GM12878 (cell line): ENCODE measurements at regions of chr11 and their contacts with region 1.

Region 1: DNA sequence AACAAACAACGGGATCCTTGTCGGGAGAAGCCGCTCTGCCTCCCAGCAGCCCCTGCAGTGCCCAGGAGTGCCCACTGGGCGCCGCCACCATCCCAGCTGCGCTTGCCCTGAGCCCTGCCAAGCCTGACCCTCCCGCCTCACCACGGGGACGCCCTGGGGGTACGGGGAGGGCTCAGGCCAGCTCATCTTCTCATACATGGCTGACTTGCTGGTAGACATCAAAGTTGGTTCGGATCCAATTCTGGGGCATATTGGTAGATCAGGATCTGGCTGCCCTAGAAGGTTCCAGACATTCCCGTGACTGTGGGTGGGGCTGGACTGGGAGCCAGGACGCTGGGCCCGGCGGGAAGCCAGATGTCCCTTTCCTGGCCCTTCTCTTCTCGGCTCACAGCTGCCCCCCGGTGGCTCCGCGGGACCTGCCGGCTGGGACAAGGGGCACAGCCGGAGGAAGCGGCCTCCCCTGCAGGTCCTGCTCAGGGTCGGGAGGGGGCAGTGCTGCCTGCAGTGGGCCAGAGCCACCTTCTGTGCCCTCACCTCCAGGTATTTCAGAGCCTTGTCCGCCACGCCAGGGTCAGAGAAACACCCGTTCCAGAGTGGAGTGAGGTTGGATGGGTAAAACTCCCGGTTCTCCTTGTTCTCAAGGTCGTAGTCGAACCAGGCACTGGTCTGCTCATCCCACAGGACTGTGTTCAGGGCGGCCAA is 10.6 kb upstream of the TREH start:
- DNase-seq: no peak
- ATAC-seq: peak; percentile 97
- H3K4me3 ChIP-seq: peak overlapping the region; percentile 56; the same call in 1 of the 2 replicates
- H3K27ac ChIP-seq: no peak overlapping the region
- H3K4me1 ChIP-seq: peaks cover 35% of the 10 kb centered on the region
- H3K27me3 ChIP-seq: no peaks in the 10 kb centered on the region; a peak in 1 of 4 replicates
- CTCF ChIP-seq: peak; percentile 93 to 98 (median 95)
- EP300 ChIP-seq: no peak
- POLR2A ChIP-seq: no peak
- RAD21 ChIP-seq: peak; percentile 88

Region 2: DNA sequence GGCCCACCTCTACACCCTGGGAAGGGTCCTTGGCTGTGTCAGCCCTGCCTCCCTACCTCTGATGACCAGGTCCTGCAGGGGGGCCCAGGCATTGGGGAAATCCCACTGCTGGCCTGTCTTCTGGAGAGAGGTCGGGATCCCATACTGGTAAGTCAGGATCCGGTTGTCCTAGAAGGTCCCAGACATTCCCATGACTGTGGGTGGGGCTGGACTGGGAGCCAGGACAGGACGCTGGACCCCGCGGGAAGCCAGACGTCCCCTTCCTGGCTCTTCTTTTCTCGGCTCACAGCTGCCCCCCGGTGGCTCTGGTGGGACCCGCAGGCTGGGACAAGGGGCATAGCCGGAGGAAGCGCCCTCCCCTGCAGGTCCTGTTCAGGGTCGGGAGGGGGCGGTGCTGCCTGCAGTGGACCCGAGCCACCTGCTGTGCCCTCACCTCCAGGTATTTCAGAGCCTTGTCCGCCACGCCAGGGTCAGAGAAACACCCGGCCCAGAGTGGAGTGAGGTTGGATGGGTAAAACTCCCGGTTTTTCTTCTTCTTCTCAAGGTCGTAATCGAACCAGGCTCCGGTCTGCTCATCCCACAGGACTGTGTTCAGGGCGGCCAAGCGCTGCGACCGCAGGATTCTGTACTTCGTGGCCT is 30.6 kb before region 1 on chr11:
- CTCF ChIA-PET with region 1: interaction called, 11 read pairs
- POLR2A ChIA-PET with region 1: no interaction called
- RAD21 ChIA-PET with region 1: no interaction called
- SMC1A ChIA-PET with region 1: no interaction called
- in situ Hi-C with region 1: no loop called
- intact Hi-C with region 1: no loop called
- DNase-seq: peak; percentile 2
- ATAC-seq: peak; percentile 98
- H3K4me3 ChIP-seq: no peak overlapping the region
- H3K27ac ChIP-seq: no peak overlapping the region
- H3K4me1 ChIP-seq: no peaks in the 10 kb centered on the region
- H3K27me3 ChIP-seq: peaks cover 0 to 4% of the 10 kb centered on the region in 2 experiments; a peak in 3 of 4 replicates
- CTCF ChIP-seq: peak; percentile 86 to 96 (median 94); a peak in 5 of 6 replicates
- EP300 ChIP-seq: no peak
- POLR2A ChIP-seq: no peak
- RAD21 ChIP-seq: peak; percentile 57

Region 3: GRCh38 chr11:118766035-118766434 is 76.0 kb after region 1 on chr11:
- CTCF ChIA-PET with region 1: interaction called, 10 read pairs
- POLR2A ChIA-PET with region 1: no interaction called
- RAD21 ChIA-PET with region 1: no interaction called
- SMC1A ChIA-PET with region 1: interaction called, 3 read pairs
- in situ Hi-C with region 1: no loop called
- intact Hi-C with region 1: no loop called
- DNase-seq: no peak
- ATAC-seq: no peak
- H3K4me3 ChIP-seq: no peak overlapping the region
- H3K27ac ChIP-seq: no peak overlapping the region
- H3K4me1 ChIP-seq: no peaks in the 10 kb centered on the region
- H3K27me3 ChIP-seq: no peaks in the 10 kb centered on the region
- CTCF ChIP-seq: no peak
- EP300 ChIP-seq: no peak
- POLR2A ChIP-seq: no peak
- RAD21 ChIP-seq: no peak

Region 4: DNA sequence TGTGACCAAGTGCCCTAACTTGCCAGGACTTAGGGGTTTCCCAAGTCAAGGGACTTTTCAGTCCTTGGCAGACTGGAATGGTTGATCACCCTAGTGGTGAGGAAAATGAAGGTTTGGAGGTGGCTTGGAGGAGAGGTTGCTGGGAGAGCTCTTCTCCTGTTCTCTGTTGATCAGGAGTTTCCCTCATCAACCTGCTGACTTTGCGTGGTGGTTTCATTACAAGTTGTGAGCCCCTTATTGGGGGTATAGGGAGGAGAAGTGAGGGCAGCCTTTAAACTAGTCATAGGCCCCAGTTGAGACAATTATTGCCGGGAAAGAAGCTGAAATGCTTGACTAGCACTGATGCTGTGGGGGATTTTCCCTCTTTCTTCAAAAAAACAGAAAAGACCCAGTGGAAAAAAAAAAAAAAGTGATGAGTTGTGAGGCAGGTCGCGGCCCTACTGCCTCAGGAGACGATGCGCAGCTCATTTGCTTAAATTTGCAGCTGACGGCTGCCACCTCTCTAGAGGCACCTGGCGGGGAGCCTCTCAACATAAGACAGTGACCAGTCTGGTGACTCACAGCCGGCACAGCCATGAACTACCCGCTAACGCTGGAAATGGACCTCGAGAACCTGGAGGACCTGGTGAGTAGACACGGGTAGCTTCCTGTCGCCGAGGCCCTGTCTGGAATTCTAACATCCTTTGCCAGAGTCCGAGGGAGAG is 193.5 kb after region 1 on chr11 and contains the start of gene CXCR5:
- CTCF ChIA-PET with region 1: interaction called, 11 read pairs
- POLR2A ChIA-PET with region 1: interaction called, 3 read pairs
- RAD21 ChIA-PET with region 1: interaction called, 5 read pairs
- SMC1A ChIA-PET with region 1: interaction called, 11 read pairs
- in situ Hi-C with region 1: no loop called
- intact Hi-C with region 1: no loop called
- DNase-seq: no peak
- ATAC-seq: peak; percentile 81
- H3K4me3 ChIP-seq: peak within 1 kb of the TSS; percentile 13; the same call in 1 of the 2 replicates
- H3K27ac ChIP-seq: no peak within 1 kb of the TSS
- H3K4me1 ChIP-seq: peaks cover 43% of the 10 kb centered on the region
- H3K27me3 ChIP-seq: peaks cover 3 to 9% of the 10 kb centered on the region in 2 experiments; a peak in 2 of 4 replicates
- CTCF ChIP-seq: peak in 2 of 3 experiments; percentile 8 to 27; a peak in 2 of 6 replicates
- EP300 ChIP-seq: no peak
- POLR2A ChIP-seq: peak; percentile 58
- RAD21 ChIP-seq: peak; percentile 30; the same call in 1 of the 2 replicates
- polyA plus RNA-seq, gene CXCR5: 0.03 to 0.11 TPM

Region 5: GRCh38 chr11:118907051-118908042 is 217.3 kb after region 1 on chr11:
- CTCF ChIA-PET with region 1: interaction called, 10 read pairs
- POLR2A ChIA-PET with region 1: no interaction called
- RAD21 ChIA-PET with region 1: no interaction called
- SMC1A ChIA-PET with region 1: interaction called, 7 read pairs
- in situ Hi-C with region 1: no loop called
- intact Hi-C with region 1: no loop called
- DNase-seq: peak; percentile 61
- ATAC-seq: peak; percentile 98
- H3K4me3 ChIP-seq: no peak overlapping the region
- H3K27ac ChIP-seq: no peak overlapping the region
- H3K4me1 ChIP-seq: peaks cover 10% of the 10 kb centered on the region
- H3K27me3 ChIP-seq: no peaks in the 10 kb centered on the region
- CTCF ChIP-seq: peak; percentile 89 to 99 (median 93); a peak in 5 of 6 replicates
- EP300 ChIP-seq: no peak
- POLR2A ChIP-seq: 0 out of 2 replicates have a peak, but pooled peaks have one; percentile 13
- RAD21 ChIP-seq: peak; percentile 98

Region 6: DNA sequence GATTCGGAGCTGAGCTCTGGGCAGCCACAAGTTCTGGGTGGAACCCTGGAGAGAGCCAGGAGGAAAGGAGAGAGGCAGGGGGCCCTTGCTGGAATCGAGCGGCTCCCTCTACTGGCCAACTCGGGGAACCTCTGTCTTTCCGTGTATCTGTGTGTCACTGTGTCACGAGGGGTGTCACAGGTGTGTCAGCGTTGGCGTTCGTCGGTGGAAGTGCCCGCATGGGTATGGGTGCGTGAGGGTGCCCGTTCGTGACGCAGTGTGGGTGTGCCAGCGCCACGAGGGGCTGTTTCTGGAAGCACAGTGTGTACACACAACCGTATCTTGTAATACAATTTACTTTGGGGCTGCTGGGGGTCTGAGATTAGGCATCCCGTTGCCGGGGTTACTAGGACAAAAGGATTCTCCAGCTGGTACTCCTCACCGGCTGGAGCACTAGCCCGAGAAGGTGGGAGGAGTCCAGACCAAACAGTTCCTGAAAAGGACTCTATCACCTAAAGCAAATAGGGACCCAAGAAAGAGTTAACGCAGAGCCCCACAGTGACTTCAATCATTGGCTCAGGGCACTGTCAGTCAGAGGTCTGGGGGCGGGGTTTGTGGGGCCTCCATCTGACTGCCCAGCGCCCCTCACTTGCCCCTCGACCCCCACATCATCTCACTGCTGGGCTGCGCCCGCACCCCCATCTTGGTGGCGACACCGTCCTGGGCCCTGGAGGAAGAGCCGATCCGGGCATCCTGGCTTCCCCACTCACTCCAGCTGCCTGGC is 238.3 kb after region 1 on chr11:
- CTCF ChIA-PET with region 1: interaction called, 14 read pairs
- POLR2A ChIA-PET with region 1: interaction called, 5 read pairs
- RAD21 ChIA-PET with region 1: interaction called, 5 read pairs
- SMC1A ChIA-PET with region 1: interaction called, 9 read pairs
- in situ Hi-C with region 1: no loop called
- intact Hi-C with region 1: loop called (anchors 1 kb)
- DNase-seq: peak; percentile 67
- ATAC-seq: peak; percentile 67
- H3K4me3 ChIP-seq: peak overlapping the region; percentile 97
- H3K27ac ChIP-seq: peak overlapping the region; percentile 67
- H3K4me1 ChIP-seq: peaks cover 35% of the 10 kb centered on the region
- H3K27me3 ChIP-seq: no peaks in the 10 kb centered on the region
- CTCF ChIP-seq: peak; percentile 93 to 97 (median 96)
- EP300 ChIP-seq: peak; percentile 15 to 60; a peak in 1 of 4 replicates
- POLR2A ChIP-seq: 0 out of 2 replicates have a peak, but pooled peaks have one; percentile 49
- RAD21 ChIP-seq: peak; percentile 63

Region 7: GRCh38 chr11:118956094-118956846 is 266.3 kb after region 1 on chr11 and contains the start of gene UPK2:
- CTCF ChIA-PET with region 1: interaction called, 18 read pairs
- POLR2A ChIA-PET with region 1: interaction called, 3 read pairs
- RAD21 ChIA-PET with region 1: interaction called, 5 read pairs
- SMC1A ChIA-PET with region 1: interaction called, 4 read pairs
- in situ Hi-C with region 1: no loop called
- intact Hi-C with region 1: loop called (anchors 2 kb)
- DNase-seq: peak; percentile 19
- ATAC-seq: peak; percentile 100
- H3K4me3 ChIP-seq: no peak within 1 kb of the TSS
- H3K27ac ChIP-seq: no peak within 1 kb of the TSS
- H3K4me1 ChIP-seq: no peaks in the 10 kb centered on the region
- H3K27me3 ChIP-seq: peaks cover 0 to 9% of the 10 kb centered on the region in 2 experiments; a peak in 2 of 4 replicates
- CTCF ChIP-seq: peak; percentile 91 to 98 (median 97)
- EP300 ChIP-seq: no peak
- POLR2A ChIP-seq: no peak
- RAD21 ChIP-seq: peak; percentile 94
- polyA plus RNA-seq, gene UPK2: not detected